AG04450 (cell line): ENCODE measurements at regions of chr19 and their contacts with region 1.

Region 1: GRCh38 chr19:39792999-39793546 is 14.4 kb downstream of the LEUTX start:
- DNase-seq: peak; percentile 30
- H3K4me3 ChIP-seq: peak overlapping the region; percentile 69
- H3K27ac ChIP-seq: no peak overlapping the region
- H3K27me3 ChIP-seq: peaks cover 3% of the 10 kb centered on the region
- CTCF ChIP-seq: peak; percentile 97

Region 2: GRCh38 chr19:39778763-39779162 is 14.3 kb before region 1 on chr19 and contains the start of gene LEUTX:
- CTCF ChIA-PET with region 1: interaction called, 30 read pairs
- POLR2A ChIA-PET with region 1: no interaction called
- DNase-seq: no peak
- H3K4me3 ChIP-seq: no peak within 1 kb of the TSS
- H3K27ac ChIP-seq: no peak within 1 kb of the TSS
- H3K27me3 ChIP-seq: peaks cover 7% of the 10 kb centered on the region
- CTCF ChIP-seq: no peak
- polyA plus RNA-seq, gene LEUTX: not detected in 2 replicates

Region 3: DNA sequence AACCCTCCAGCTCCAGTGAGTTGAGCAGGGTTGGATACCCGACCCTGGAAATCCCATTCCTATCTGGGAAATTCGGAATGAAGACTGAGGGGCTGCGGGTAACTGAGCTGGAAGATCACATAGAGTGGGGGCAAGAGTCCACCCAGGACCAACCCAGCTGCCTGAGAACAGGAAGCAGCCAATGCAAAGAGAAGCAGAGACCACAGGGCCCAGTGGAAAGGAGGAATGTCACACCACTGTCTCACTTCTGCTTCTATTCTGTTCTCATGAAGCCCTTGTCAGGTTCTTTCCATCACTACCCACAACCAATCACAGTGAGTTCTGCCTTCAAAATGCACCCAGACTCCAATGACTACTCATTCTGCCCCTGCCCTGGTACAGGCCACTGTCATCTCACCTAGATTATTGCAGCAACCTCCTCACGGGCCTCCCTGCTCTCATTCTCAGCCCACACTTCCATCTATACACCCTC is 25.6 kb after region 1 on chr19:
- CTCF ChIA-PET with region 1: interaction called, 11 read pairs
- POLR2A ChIA-PET with region 1: interaction called, 11 read pairs
- DNase-seq: no peak
- H3K4me3 ChIP-seq: no peak overlapping the region
- H3K27ac ChIP-seq: no peak overlapping the region
- H3K27me3 ChIP-seq: no peaks in the 10 kb centered on the region
- CTCF ChIP-seq: no peak

Region 4: DNA sequence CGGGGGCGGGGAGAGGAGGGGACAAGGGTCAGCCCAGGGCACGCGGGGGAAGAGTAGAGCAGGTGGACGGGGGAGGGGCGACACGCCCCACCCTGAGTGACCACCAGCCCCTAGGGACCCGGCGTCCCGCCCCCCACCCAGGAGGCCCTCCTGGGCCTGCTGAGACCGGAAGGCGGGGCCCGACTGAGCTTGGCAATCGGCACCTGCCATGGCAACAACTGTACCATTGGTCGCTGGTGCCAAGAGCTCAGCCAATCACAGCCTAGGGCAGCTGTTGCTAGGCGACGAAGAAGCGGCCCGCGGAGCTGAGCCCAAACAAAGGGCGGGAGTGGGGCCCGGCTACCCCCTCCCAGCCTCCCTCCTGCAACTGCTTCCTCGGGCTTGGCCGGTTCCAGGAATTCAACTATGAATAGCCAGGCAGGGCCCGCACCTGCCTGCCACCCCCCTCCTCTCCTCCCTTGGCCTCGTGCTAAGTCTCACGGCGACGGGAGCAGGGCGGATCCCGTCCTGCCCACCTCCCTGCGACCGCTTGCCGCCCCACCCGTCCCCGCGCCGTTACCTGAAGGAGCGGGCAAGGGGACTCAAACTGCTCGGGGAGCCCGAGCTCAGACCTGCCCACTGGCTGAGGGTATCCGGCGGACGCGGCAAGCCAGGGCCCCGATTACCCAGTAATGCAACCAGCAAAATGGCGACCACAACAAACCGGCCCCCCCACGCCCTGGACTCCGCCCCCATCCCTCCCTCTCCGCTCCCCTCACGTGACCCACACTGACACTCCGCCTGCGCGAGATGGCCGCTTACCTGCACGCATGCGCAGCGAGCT is 40.6 kb after region 1 on chr19 and contains the start of gene DYRK1B:
- CTCF ChIA-PET with region 1: interaction called, 10 read pairs
- POLR2A ChIA-PET with region 1: interaction called, 4 read pairs
- DNase-seq: peak; percentile 96
- H3K4me3 ChIP-seq: peak within 1 kb of the TSS; percentile 86
- H3K27ac ChIP-seq: peak within 1 kb of the TSS; percentile 89
- H3K27me3 ChIP-seq: no peaks in the 10 kb centered on the region
- CTCF ChIP-seq: no peak
- polyA plus RNA-seq, gene DYRK1B: 7.2 and 9.2 TPM in 2 replicates

Region 5: GRCh38 chr19:39970675-39971379 is 177.8 kb after region 1 on chr19 and contains the start of gene PSMC4:
- CTCF ChIA-PET with region 1: interaction called, 83 read pairs
- POLR2A ChIA-PET with region 1: no interaction called
- DNase-seq: peak; percentile 97
- H3K4me3 ChIP-seq: peak within 1 kb of the TSS; percentile 98
- H3K27ac ChIP-seq: peak within 1 kb of the TSS; percentile 91
- H3K27me3 ChIP-seq: no peaks in the 10 kb centered on the region
- CTCF ChIP-seq: peak; percentile 76
- polyA plus RNA-seq, gene PSMC4: 68.6 and 90.2 TPM in 2 replicates